Activated CD4-positive, alpha-beta T cell treated with anti-CD3 and anti-CD28 coated beads, Interleukin-2, amount 10 ng/mL, durations not matched to agents 7 days and 5 days (primary cell): ENCODE measurements at regions of chr9 and their contacts with region 1.

Region 1: DNA sequence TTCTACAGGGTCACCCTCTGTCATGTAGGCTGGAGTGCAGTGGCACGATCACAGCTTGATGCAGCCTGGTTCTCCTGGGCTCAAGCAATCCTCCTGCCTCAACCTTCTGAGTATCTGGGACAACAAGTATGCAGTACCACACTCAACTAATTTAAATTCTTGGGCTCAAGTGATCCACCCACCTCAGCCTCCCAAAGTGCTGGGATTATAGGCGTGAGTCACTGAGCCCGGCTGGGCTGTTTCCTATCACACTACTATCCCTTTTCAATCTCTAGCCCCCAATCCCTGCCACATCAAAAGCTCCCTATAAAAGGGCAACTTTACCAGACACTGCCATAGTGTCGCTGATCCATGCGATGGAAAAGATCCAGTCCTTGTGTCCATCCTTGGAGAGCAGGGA is 20.4 kb downstream of the DCAF12 start:
- DNase-seq: no peak
- H3K4me3 Mint-ChIP-seq: no peak overlapping the region
- H3K27ac Mint-ChIP-seq: no peak overlapping the region
- H3K4me1 Mint-ChIP-seq: peaks cover 3% of the 10 kb centered on the region
- H3K27me3 Mint-ChIP-seq: no peaks in the 10 kb centered on the region

Region 2: GRCh38 chr9:33952066-33952465 is 154.0 kb before region 1 on chr9:
- CTCF ChIA-PET with region 1: no interaction called
- POLR2A ChIA-PET with region 1: interaction called, 10 read pairs
- DNase-seq: no peak
- H3K4me3 Mint-ChIP-seq: no peak overlapping the region
- H3K27ac Mint-ChIP-seq: no peak overlapping the region
- H3K4me1 Mint-ChIP-seq: no peaks in the 10 kb centered on the region
- H3K27me3 Mint-ChIP-seq: no peaks in the 10 kb centered on the region